Activated B cell treated with CpG ODN at 0.5 μM for 24 hours (primary cell): ENCODE measurements at regions of chr1 and their contacts with region 1.

Region 1: GRCh38 chr1:45359882-45360513 is 19.8 kb upstream of the MUTYH start:
- DNase-seq: no peak
- ATAC-seq: peak; percentile 73
- H3K4me3 Mint-ChIP-seq: peak overlapping the region; percentile 1
- H3K27ac Mint-ChIP-seq: peak overlapping the region; percentile 37
- H3K4me1 Mint-ChIP-seq: peaks cover 19% of the 10 kb centered on the region
- H3K27me3 Mint-ChIP-seq: no peaks in the 10 kb centered on the region
- CTCF ChIP-seq: no peak

Region 2: GRCh38 chr1:45373573-45373972 is 13.6 kb after region 1 on chr1:
- CTCF ChIA-PET with region 1: interaction called, 14 read pairs
- POLR2A ChIA-PET with region 1: no interaction called
- intact Hi-C with region 1: no loop called
- DNase-seq: no peak
- ATAC-seq: no peak
- H3K4me3 Mint-ChIP-seq: peak overlapping the region; percentile 21
- H3K27ac Mint-ChIP-seq: peak overlapping the region; percentile 46
- H3K4me1 Mint-ChIP-seq: peaks cover 47% of the 10 kb centered on the region
- H3K27me3 Mint-ChIP-seq: no peaks in the 10 kb centered on the region
- CTCF ChIP-seq: no peak

Region 3: GRCh38 chr1:45410850-45411314 is 50.9 kb after region 1 on chr1:
- CTCF ChIA-PET with region 1: interaction called, 10 read pairs
- POLR2A ChIA-PET with region 1: no interaction called
- intact Hi-C with region 1: loop called (anchors 2 kb)
- DNase-seq: no peak
- ATAC-seq: no peak
- H3K4me3 Mint-ChIP-seq: peak overlapping the region; percentile 25
- H3K27ac Mint-ChIP-seq: peak overlapping the region; percentile 75
- H3K4me1 Mint-ChIP-seq: peaks cover 68% of the 10 kb centered on the region
- H3K27me3 Mint-ChIP-seq: no peaks in the 10 kb centered on the region
- CTCF ChIP-seq: no peak

Region 4: DNA sequence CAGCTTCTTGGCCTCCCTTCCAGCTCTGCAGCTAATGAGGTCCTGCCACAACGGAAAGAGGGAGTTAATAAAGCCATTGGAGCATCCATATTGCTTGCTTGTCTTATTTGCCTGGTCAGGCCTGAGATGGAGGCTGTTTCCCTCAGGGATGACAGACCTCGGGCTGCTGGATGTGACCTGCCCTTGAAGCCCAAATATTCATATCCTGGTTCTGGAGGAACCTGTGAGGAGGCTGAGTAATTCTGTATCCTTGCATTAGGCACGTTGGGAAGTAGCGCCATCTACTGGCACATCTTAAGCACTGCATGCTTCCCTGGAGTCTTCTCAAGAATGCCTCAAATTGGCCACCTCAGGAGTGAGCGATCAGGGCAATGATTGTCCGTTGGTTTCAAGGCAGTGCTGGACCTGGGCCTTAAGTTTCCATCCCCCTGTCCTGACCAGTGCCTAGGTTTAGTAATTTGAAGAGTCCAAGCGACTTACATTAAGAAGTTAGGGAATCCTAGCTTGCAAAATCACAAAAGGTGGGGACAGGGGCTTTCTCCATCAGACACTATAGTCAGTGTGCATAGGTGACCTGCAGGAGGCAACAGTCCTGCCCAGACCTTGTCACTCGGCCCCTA is 210.1 kb after region 1 on chr1:
- CTCF ChIA-PET with region 1: interaction called, 20 read pairs
- POLR2A ChIA-PET with region 1: no interaction called
- intact Hi-C with region 1: loop called (anchors 1 kb)
- DNase-seq: peak; percentile 48
- ATAC-seq: peak; percentile 98
- H3K4me3 Mint-ChIP-seq: no peak overlapping the region
- H3K27ac Mint-ChIP-seq: no peak overlapping the region
- H3K4me1 Mint-ChIP-seq: no peaks in the 10 kb centered on the region
- H3K27me3 Mint-ChIP-seq: no peaks in the 10 kb centered on the region
- CTCF ChIP-seq: peak; percentile 17